Activated CD4-positive, alpha-beta T cell treated with anti-CD3 and anti-CD28 coated beads, Interleukin-2, amount 10 ng/mL, durations not matched to agents 24 days and 14 days (primary cell): ENCODE measurements at regions of chr1 and their contacts with region 1.

Region 1: GRCh38 chr1:236603991-236604904 is at the start of gene HEATR1:
- DNase-seq: peak; percentile 97
- H3K4me3 Mint-ChIP-seq: peak within 1 kb of the TSS; percentile 89
- H3K27ac Mint-ChIP-seq: peak within 1 kb of the TSS; percentile 94
- H3K4me1 Mint-ChIP-seq: peaks cover 24% of the 10 kb centered on the region
- H3K27me3 Mint-ChIP-seq: peaks cover 14% of the 10 kb centered on the region
- total RNA-seq, gene HEATR1: 83.0 and 91.8 TPM in 2 replicates

Region 2: DNA sequence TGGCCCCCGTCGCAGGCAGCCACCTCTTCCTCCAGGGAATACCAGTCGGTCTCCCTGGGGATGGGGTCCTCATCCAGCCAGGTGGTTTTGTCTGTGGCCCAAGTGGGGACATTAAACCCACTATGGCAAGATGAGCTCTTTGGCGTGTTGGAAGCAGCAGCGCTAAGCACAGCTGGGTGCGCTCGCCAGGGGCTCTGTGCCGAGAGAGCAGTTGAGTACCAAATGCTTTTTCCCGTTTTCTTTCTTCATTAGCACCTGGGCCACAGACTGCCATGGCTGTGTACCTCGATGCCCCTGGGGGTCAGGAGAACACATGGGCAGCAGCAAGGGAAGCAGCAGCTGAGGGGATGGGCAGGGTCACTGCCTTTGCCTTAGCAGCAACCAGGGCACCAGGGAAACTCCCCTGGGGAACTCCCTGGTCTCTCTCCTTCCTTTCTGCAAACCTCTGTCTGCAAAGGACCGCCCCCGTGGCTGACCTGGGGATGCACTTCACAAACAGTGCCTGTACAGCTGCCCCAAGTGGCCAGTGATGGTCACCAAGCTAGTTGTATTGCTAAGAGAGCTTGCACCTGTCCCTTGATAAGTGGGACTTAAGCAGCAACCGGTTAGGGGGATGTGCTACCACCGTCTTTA is 179.1 kb before region 1 on chr1:
- intact Hi-C with region 1: no loop called
- DNase-seq: peak; percentile 74
- H3K4me3 Mint-ChIP-seq: no peak overlapping the region
- H3K27ac Mint-ChIP-seq: no peak overlapping the region
- H3K4me1 Mint-ChIP-seq: peaks cover 14% of the 10 kb centered on the region
- H3K27me3 Mint-ChIP-seq: no peaks in the 10 kb centered on the region

Region 3: GRCh38 chr1:236502885-236503639 is 101.2 kb before region 1 on chr1:
- intact Hi-C with region 1: no loop called
- DNase-seq: peak; percentile 61
- H3K4me3 Mint-ChIP-seq: peak overlapping the region; percentile 66
- H3K27ac Mint-ChIP-seq: peak overlapping the region; percentile 73
- H3K4me1 Mint-ChIP-seq: peaks cover 10% of the 10 kb centered on the region
- H3K27me3 Mint-ChIP-seq: peaks cover 2% of the 10 kb centered on the region

Region 4: GRCh38 chr1:236523701-236524141 is 80.5 kb before region 1 on chr1 and contains the start of gene LGALS8:
- intact Hi-C with region 1: loop called (anchors 1 kb)
- DNase-seq: peak; percentile 95
- H3K4me3 Mint-ChIP-seq: peak within 1 kb of the TSS; percentile 93
- H3K27ac Mint-ChIP-seq: peak within 1 kb of the TSS; percentile 98
- H3K4me1 Mint-ChIP-seq: peaks cover 19% of the 10 kb centered on the region
- H3K27me3 Mint-ChIP-seq: no peaks in the 10 kb centered on the region
- total RNA-seq, gene LGALS8: 68.9 and 71.9 TPM in 2 replicates

Region 5: DNA sequence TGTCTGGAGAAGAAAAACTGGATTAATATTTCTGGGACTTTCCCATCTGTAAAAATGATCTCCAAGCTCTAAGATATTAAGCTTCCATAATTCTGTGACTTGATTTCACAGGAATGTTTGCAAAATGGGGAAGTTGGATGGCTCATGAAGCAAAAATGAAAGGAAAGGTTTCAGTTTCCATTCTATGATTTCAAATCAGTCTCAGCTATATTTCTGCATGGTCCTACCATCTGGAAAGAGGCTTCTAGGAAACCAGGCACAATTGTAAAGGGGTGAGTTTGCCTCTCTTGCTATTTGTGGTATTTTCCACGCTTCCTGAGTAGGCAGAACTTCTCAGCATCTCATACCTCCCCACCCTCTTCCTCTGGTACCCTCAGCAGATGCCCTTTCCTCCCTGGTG is 59.7 kb after region 1 on chr1:
- intact Hi-C with region 1: no loop called
- DNase-seq: no peak
- H3K4me3 Mint-ChIP-seq: no peak overlapping the region
- H3K27ac Mint-ChIP-seq: no peak overlapping the region
- H3K4me1 Mint-ChIP-seq: peaks cover 4% of the 10 kb centered on the region
- H3K27me3 Mint-ChIP-seq: no peaks in the 10 kb centered on the region

Region 6: GRCh38 chr1:236795035-236795756 is 190.9 kb after region 1 on chr1 and contains the start of gene MTR:
- intact Hi-C with region 1: loop called (anchors 1 kb)
- DNase-seq: peak; percentile 99
- H3K4me3 Mint-ChIP-seq: peak within 1 kb of the TSS; percentile 92
- H3K27ac Mint-ChIP-seq: peak within 1 kb of the TSS; percentile 94
- H3K4me1 Mint-ChIP-seq: peaks cover 28% of the 10 kb centered on the region
- H3K27me3 Mint-ChIP-seq: peaks cover 9% of the 10 kb centered on the region
- total RNA-seq, gene MTR: 50.7 and 51.8 TPM in 2 replicates

Region 7: DNA sequence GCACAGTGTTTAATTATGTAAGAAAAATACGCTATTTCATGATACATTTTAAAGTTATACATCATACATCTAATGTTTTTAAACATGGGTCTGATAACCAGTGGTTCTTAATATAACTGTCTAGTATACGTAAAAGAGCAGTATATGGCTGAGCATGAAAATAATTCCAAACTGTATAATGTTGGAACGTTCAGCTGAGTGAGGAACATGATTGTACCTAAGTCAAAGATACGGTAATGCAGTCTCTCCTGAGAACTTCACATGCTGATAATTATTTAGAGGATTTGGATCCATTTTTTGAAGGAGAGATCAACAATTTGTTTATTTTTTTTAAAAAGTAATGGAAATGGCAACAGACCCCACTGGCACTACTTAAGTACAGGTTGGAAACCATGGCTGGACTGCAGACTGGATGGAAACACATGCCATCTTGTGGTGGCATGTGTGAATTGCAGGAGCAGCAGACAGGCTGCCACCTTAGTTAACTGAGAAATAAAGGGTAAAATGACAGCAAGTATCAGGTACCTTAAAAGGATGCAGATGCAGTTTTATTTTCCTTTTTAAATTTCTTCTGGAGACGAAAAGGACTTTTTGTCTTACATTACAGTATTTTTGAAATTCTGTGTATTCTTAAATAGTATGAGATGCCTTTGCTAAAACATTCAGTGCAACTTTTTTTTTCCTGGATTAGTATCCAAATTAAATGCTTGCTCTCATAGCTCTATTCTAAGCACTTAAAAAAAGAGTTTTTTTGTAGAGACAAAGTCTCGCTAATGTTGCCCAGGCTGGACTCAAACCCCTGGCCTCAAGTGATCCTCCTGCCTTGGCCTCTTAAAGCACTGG is 264.6 kb after region 1 on chr1:
- intact Hi-C with region 1: loop called (anchors 2 kb)
- DNase-seq: peak; percentile 83
- H3K4me3 Mint-ChIP-seq: no peak overlapping the region
- H3K27ac Mint-ChIP-seq: no peak overlapping the region
- H3K4me1 Mint-ChIP-seq: peaks cover 10% of the 10 kb centered on the region
- H3K27me3 Mint-ChIP-seq: no peaks in the 10 kb centered on the region

Region 8: DNA sequence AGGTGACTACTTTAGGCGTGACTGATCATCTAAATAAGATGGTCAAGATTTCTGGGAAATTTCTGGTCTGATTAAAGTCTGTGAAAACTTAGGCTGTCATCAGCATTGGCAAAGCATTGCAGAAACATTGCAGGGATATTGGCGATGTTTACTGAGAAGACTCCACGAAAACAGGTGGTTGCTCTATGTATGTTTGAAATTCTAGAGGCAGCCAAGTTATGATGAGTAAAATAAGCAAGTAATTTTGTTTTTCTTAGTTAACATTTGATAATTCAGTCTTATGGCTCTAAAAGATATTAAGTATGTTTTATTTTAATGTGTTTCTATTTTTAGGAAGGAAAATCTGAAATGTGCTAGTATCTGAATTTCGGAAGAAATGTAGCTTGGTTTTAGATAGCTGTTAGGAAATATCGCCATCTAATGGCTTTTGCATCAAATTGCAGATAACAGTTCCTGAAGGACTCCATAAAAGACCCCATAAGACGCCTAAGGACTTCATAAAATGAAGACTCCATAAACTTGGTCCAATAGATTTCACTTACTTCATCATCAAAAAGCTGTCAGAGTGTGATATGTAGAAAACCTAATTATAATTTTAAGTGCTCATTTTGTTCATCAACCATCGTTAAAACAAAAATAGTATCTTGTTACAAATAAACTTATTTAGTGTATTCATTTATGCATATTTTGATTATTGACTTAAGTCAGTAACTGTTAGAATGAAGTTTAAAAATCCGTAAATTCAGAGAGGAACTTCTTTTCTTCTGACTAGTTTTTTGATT is 782.3 kb after region 1 on chr1:
- intact Hi-C with region 1: loop called (anchors 5 kb)
- DNase-seq: no peak
- H3K4me3 Mint-ChIP-seq: no peak overlapping the region
- H3K27ac Mint-ChIP-seq: no peak overlapping the region
- H3K4me1 Mint-ChIP-seq: no peaks in the 10 kb centered on the region
- H3K27me3 Mint-ChIP-seq: peaks cover 3% of the 10 kb centered on the region

Region 9: DNA sequence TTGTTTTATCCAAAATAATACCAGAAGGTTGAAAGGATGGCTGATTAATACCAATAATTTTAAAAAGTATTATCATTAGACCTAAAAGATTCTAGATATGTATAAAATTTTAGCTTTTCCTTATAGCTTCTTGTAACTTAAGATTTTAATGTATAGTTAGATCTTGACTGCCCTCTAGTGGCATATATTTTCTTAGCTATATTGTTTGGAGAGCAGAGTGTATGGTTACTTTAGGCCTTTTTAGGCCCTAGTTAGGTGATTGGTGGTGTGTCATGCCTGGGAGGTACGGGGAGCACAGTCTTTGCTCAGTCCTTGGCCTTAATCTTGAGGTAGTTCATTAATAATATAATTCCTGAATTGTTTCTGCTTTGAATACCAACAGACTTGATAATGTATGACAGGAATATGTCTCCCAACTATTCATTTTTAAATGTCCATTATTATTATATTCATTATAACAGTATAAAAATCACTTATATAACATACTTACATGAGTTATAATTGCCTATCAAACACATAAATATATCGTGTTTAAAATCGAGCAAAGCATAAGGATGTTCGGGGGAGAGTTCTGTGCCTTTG is 958.1 kb after region 1 on chr1:
- intact Hi-C with region 1: loop called (anchors 2 kb)
- DNase-seq: peak; percentile 63
- H3K4me3 Mint-ChIP-seq: no peak overlapping the region
- H3K27ac Mint-ChIP-seq: no peak overlapping the region
- H3K4me1 Mint-ChIP-seq: no peaks in the 10 kb centered on the region
- H3K27me3 Mint-ChIP-seq: peaks cover 7% of the 10 kb centered on the region